ENCODE measurements at regions of chr12 and their contacts with region 1.

Region 1: GRCh38 chr12:7959701-7960121 is 23.7 kb upstream of the SLC2A3 start:
- DNase-seq: peak; percentile 64 to 90 (median 86)
- H3K4me3 ChIP-seq: peak overlapping the region in 6 of 7 experiments; percentile 48 to 81 (median 66)
- H3K27ac ChIP-seq: peak overlapping the region in 1 of 2 experiments; percentile 77
- H3K4me1 ChIP-seq: peaks cover 26 to 60% (median 49%) of the 10 kb centered on the region in 4 experiments
- H3K27me3 ChIP-seq: no peaks in the 10 kb centered on the region

Region 2: DNA sequence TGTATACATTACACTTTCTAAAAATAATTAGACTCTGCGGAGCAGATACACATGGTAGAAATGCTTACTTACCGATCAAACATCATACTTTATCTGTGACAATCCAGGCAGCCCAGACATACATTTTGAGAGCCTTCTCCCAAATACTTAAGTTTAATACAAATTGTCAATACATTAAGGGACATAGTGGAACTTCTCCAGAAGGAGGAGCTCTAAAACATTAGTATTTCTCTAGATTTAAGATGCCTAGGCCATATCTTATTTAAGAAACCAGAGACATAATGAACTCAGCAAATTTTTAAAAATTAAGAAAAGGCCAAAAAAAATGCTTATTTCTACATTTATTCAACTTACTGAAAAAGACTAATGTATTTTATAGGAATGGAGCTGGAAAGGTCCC is 639.8 kb before region 1 on chr12:
- CTCF ChIA-PET with region 1: no interaction called
- POLR2A ChIA-PET with region 1: no interaction called
- DNase-seq: peak; percentile 4 to 9 (median 5)
- H3K4me3 ChIP-seq: no peak overlapping the region
- H3K27ac ChIP-seq: no peak overlapping the region
- H3K4me1 ChIP-seq: no peaks in the 10 kb centered on the region
- H3K27me3 ChIP-seq: no peaks in the 10 kb centered on the region

Region 3: DNA sequence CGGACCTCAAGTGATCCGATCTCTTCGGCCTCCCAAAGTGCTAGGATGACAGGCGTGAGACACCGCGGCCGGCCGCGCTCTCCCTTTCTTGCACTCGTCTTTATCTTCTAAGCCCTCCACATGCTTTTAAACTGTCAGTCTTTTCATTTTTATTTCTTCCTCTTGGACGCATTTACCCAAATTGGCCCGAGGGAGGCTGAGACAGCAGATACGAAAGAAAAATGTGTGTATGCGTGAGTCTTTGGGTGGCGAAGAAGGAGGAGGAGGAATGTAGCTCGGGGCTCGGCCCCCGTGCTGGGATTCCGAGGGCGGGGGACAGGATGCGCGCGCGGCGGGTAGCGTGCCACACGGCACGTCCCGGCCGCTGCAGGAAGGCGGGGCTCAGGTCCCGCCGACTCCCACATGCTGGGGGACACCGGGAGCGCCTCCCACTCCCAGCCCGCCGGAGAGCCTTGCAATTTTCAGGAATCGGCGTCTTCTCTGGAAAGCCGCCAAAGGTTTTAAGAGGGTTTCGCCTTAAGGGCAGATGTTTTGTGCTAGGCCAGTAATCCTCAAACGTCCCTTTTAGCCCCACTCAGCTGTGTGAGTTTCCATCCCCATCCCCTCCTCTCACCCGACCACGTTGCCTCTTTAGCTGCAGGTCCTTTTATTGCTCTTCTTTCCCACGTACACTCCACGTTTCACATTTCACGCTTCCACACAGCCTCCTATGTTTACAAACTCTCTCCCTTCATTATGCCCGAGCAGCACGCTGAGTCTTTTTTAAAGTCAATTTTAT is 11.0 kb after region 1 on chr12:
- CTCF ChIA-PET with region 1: interaction called, 13 read pairs
- POLR2A ChIA-PET with region 1: interaction called, 13 read pairs
- DNase-seq: peak; percentile 82 to 90 (median 88)
- H3K4me3 ChIP-seq: peak overlapping the region; percentile 37 to 85 (median 70)
- H3K27ac ChIP-seq: peak overlapping the region; percentile 46 to 80
- H3K4me1 ChIP-seq: peaks cover 6 to 32% (median 24%) of the 10 kb centered on the region in 4 experiments
- H3K27me3 ChIP-seq: no peaks in the 10 kb centered on the region

Region 4: GRCh38 chr12:7989827-7990551 is 30.3 kb after region 1 on chr12:
- CTCF ChIA-PET with region 1: interaction called, 36 read pairs
- POLR2A ChIA-PET with region 1: interaction called, 7 read pairs
- DNase-seq: peak; percentile 84 to 97 (median 95)
- H3K4me3 ChIP-seq: peak overlapping the region in 5 of 7 experiments; percentile 0 to 62 (median 33)
- H3K27ac ChIP-seq: peak overlapping the region in 1 of 2 experiments; percentile 54
- H3K4me1 ChIP-seq: peaks cover 12 to 41% (median 27%) of the 10 kb centered on the region in 4 experiments
- H3K27me3 ChIP-seq: no peaks in the 10 kb centered on the region

Region 5: DNA sequence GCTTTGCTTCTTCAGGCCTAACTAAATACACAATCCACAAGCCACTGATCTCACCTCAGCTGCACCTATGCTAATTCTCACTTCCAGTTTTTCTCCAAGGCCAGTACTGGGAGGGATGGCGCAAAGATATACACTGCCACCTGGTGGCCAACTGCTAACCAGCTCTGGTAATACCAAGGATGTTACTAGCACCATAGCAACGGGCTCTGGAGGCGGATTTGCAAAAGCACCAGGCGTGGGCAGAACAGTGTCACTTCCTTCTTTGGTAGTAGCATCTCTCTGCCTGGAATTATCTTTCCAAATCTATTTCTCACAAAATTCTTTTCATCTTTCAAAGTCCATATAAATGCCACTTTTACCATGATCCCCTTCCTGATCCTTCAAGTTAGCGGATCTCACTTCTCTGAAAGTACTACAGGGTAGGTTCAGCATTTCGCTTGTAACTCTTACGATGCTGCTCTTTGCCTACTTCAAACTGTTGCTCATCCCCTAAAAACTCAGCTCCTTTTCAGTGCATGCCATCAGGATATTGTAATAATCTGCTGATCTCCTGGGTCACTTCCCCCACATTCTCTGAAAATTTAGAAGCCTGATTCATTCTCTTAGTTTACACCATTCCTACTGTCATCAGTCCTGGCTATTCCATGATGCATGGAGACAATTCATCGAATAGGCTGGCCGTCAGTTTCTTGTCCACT is 35.7 kb after region 1 on chr12:
- CTCF ChIA-PET with region 1: interaction called, 36 read pairs
- POLR2A ChIA-PET with region 1: interaction called, 7 read pairs
- DNase-seq: peak; percentile 81 to 95 (median 92)
- H3K4me3 ChIP-seq: no peak overlapping the region
- H3K27ac ChIP-seq: no peak overlapping the region
- H3K4me1 ChIP-seq: peaks cover 5 to 21% (median 11%) of the 10 kb centered on the region in 4 experiments
- H3K27me3 ChIP-seq: no peaks in the 10 kb centered on the region

Region 6: GRCh38 chr12:8629486-8630033 is 669.8 kb after region 1 on chr12:
- CTCF ChIA-PET with region 1: no interaction called
- POLR2A ChIA-PET with region 1: no interaction called
- DNase-seq: peak in 1 of 3 donors; percentile 4
- H3K4me3 ChIP-seq: no peak overlapping the region
- H3K27ac ChIP-seq: no peak overlapping the region
- H3K4me1 ChIP-seq: no peaks in the 10 kb centered on the region
- H3K27me3 ChIP-seq: no peaks in the 10 kb centered on the region

Measured in common myeloid progenitor, CD34-positive (primary cell).